Naive thymus-derived CD4-positive, alpha-beta T cell (primary cell): ENCODE measurements at regions of chr6 and their contacts with region 1.

Region 1: GRCh38 chr6:11653028-11653583 is 115.6 kb downstream of the TMEM170B start:
- DNase-seq: peak in 5 of 9 donors; percentile 3 to 48 (median 9)
- ATAC-seq: peak; percentile 49
- H3K4me3 ChIP-seq: no peak overlapping the region
- H3K4me3 Mint-ChIP-seq: peak overlapping the region in 1 of 10 donors; percentile 3
- H3K27ac ChIP-seq: no peak overlapping the region
- H3K27ac Mint-ChIP-seq: peak overlapping the region in 4 of 9 donors; percentile 8 to 70 (median 24)
- H3K4me1 ChIP-seq: peaks cover 0 to 4% of the 10 kb centered on the region in 2 donors
- H3K4me1 Mint-ChIP-seq: peaks cover 0 to 19% (median 5%) of the 10 kb centered on the region in 7 donors
- H3K27me3 ChIP-seq: no peaks in the 10 kb centered on the region
- H3K27me3 Mint-ChIP-seq: peaks cover 0 to 4% (median 0%) of the 10 kb centered on the region in 5 donors

Region 2: DNA sequence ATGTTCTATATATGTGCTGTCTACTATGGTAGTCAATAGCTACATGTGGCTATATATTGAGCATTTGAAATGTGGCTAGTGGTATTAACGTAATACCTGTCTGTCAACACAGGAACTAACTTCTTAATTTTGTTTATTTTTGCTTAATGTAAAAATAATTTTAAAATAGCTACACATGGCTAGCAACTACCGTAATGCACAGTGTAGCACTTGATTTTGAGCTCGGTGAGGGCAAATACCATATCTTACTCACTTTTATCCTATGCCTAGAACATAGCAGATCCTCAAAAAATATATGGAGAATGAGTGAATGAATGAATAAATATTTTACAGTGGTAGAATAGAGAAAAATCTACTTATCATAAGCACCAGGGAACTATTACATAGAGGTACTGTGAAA is 143.6 kb before region 1 on chr6:
- CTCF ChIA-PET with region 1: no interaction called
- POLR2A ChIA-PET with region 1: no interaction called
- intact Hi-C with region 1: no loop called
- DNase-seq: no peak
- ATAC-seq: no peak
- H3K4me3 ChIP-seq: no peak overlapping the region
- H3K4me3 Mint-ChIP-seq: no peak overlapping the region
- H3K27ac ChIP-seq: no peak overlapping the region
- H3K27ac Mint-ChIP-seq: no peak overlapping the region
- H3K4me1 ChIP-seq: no peaks in the 10 kb centered on the region
- H3K4me1 Mint-ChIP-seq: no peaks in the 10 kb centered on the region
- H3K27me3 ChIP-seq: no peaks in the 10 kb centered on the region
- H3K27me3 Mint-ChIP-seq: peaks cover 9 to 57% (median 15%) of the 10 kb centered on the region in 5 donors

Region 3: DNA sequence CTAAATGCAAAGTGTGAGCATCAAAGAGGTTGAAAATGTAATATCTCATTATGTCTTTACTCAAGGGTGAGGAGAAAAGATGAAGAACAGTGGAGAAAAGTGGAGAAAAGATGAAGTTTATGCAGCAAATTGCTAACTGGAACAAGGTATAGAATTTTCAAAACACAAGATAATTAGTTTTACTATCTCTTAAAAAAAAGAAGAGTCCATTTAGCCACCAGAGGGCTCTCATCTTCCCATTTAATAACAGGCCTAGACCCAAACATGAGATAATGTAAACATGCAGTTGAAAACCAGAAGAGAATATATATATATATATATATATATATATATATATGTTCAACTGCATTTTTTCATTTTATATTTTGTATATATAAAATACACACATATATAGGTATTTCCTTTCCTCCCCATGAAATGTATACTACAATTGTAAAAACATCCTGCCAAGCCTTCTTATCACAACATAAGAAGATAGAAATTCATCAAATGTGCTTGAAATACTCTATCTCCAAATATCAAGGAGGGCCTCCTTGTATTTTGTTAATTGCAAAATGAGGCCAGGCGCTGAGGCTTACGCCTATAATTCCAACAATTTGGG is 47.1 kb after region 1 on chr6:
- CTCF ChIA-PET with region 1: interaction called, 5 read pairs
- POLR2A ChIA-PET with region 1: no interaction called
- intact Hi-C with region 1: loop called in 1 of 2 experiments (anchors 1 kb)
- DNase-seq: peak in 7 of 9 donors; percentile 22 to 63 (median 51)
- ATAC-seq: peak; percentile 60
- H3K4me3 ChIP-seq: no peak overlapping the region
- H3K4me3 Mint-ChIP-seq: no peak overlapping the region
- H3K27ac ChIP-seq: no peak overlapping the region
- H3K27ac Mint-ChIP-seq: peak overlapping the region in 3 of 9 donors; percentile 21 to 66 (median 41)
- H3K4me1 ChIP-seq: peaks cover 0 to 9% of the 10 kb centered on the region in 2 donors
- H3K4me1 Mint-ChIP-seq: peaks cover 10 to 42% (median 35%) of the 10 kb centered on the region in 7 donors
- H3K27me3 ChIP-seq: no peaks in the 10 kb centered on the region
- H3K27me3 Mint-ChIP-seq: no peaks in the 10 kb centered on the region

Region 4: GRCh38 chr6:11869672-11870340 is 216.7 kb after region 1 on chr6:
- CTCF ChIA-PET with region 1: no interaction called
- POLR2A ChIA-PET with region 1: no interaction called
- intact Hi-C with region 1: no loop called
- DNase-seq: no peak
- ATAC-seq: no peak
- H3K4me3 ChIP-seq: no peak overlapping the region
- H3K4me3 Mint-ChIP-seq: no peak overlapping the region
- H3K27ac ChIP-seq: no peak overlapping the region
- H3K27ac Mint-ChIP-seq: no peak overlapping the region
- H3K4me1 ChIP-seq: no peaks in the 10 kb centered on the region
- H3K4me1 Mint-ChIP-seq: no peaks in the 10 kb centered on the region
- H3K27me3 ChIP-seq: no peaks in the 10 kb centered on the region
- H3K27me3 Mint-ChIP-seq: peaks cover 0 to 1% (median 0%) of the 10 kb centered on the region in 5 donors

Region 5: DNA sequence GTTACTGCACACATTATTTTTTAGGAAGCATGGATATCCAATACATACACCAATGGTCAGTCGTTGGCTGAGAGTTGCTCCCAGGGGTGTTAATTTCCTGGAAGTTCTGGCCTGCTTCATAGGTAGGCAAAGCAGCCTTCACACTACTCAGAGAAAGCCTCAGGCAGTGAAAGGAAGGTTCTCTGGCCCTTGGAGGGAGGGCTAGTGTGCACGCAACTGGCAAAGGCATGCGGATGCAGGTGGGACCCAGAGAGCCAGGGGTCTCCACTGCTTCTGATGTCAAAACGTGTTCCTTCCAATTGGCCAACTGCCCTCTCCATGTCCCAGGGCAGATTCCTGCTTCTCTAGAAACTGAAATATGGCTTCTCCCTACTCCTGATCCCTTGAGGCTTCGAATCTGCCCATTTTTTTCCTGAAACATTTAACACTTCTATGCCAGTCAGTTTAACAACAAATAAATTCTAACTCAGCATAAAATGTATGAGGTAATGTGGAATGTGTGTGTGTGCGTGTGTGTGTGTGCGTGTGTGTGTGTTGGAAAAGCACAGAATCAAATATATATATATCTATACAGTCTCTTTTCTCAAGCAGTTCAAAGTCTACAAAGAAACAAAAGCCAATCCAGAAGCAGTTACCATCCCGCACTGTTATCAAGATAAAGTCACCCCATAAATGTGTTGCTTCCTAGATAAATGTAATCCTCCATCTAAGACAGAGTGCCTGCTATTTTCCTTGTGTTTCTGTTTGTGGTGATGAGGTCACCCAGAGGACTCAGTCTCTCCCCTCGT is 265.0 kb after region 1 on chr6:
- CTCF ChIA-PET with region 1: no interaction called
- POLR2A ChIA-PET with region 1: no interaction called
- intact Hi-C with region 1: loop called in 1 of 2 experiments (anchors 10 kb)
- DNase-seq: no peak
- ATAC-seq: no peak
- H3K4me3 ChIP-seq: no peak overlapping the region
- H3K4me3 Mint-ChIP-seq: no peak overlapping the region
- H3K27ac ChIP-seq: no peak overlapping the region
- H3K27ac Mint-ChIP-seq: peak overlapping the region in 2 of 9 donors; percentile 6 to 78
- H3K4me1 ChIP-seq: no peaks in the 10 kb centered on the region
- H3K4me1 Mint-ChIP-seq: peaks cover 0 to 2% (median 0%) of the 10 kb centered on the region in 7 donors
- H3K27me3 ChIP-seq: no peaks in the 10 kb centered on the region
- H3K27me3 Mint-ChIP-seq: no peaks in the 10 kb centered on the region

Region 6: GRCh38 chr6:12150812-12151432 is 497.8 kb after region 1 on chr6:
- CTCF ChIA-PET with region 1: no interaction called
- POLR2A ChIA-PET with region 1: no interaction called
- intact Hi-C with region 1: loop called (anchors 2 to 5 kb)
- DNase-seq: peak in 5 of 9 donors; percentile 16 to 45 (median 35)
- ATAC-seq: no peak
- H3K4me3 ChIP-seq: no peak overlapping the region
- H3K4me3 Mint-ChIP-seq: no peak overlapping the region
- H3K27ac ChIP-seq: no peak overlapping the region
- H3K27ac Mint-ChIP-seq: no peak overlapping the region
- H3K4me1 ChIP-seq: no peaks in the 10 kb centered on the region
- H3K4me1 Mint-ChIP-seq: peaks cover 4 to 29% (median 14%) of the 10 kb centered on the region in 7 donors
- H3K27me3 ChIP-seq: no peaks in the 10 kb centered on the region
- H3K27me3 Mint-ChIP-seq: no peaks in the 10 kb centered on the region

Region 7: DNA sequence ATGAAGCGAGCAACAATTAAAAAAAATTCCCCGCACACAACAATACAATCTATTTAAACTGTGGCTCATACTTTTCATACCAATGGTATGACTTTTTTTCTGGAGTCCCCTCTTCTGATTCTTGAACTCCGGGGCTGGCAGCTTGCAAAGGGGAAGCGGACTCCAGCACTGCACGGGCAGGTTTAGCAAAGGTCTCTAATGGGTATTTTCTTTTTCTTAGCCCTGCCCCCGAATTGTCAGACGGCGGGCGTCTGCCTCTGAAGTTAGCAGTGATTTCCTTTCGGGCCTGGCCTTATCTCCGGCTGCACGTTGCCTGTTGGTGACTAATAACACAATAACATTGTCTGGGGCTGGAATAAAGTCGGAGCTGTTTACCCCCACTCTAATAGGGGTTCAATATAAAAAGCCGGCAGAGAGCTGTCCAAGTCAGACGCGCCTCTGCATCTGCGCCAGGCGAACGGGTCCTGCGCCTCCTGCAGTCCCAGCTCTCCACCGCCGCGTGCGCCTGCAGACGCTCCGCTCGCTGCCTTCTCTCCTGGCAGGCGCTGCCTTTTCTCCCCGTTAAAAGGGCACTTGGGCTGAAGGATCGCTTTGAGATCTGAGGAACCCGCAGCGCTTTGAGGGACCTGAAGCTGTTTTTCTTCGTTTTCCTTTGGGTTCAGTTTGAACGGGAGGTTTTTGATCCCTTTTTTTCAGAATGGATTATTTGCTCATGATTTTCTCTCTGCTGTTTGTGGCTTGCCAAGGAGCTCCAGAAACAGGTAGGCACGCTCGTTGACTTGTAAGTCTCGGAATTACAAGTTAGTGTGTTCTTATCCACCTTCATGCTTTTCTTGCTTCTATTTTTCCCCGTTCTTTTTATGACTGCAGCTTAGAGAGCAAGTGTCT is 637.1 kb after region 1 on chr6 and contains the start of gene EDN1:
- CTCF ChIA-PET with region 1: interaction called, 16 read pairs
- POLR2A ChIA-PET with region 1: no interaction called
- intact Hi-C with region 1: loop called (anchors 1 kb)
- DNase-seq: peak in 8 of 9 donors; percentile 16 to 61 (median 40)
- ATAC-seq: peak; percentile 87
- H3K4me3 ChIP-seq: peak within 1 kb of the TSS; percentile 46
- H3K4me3 Mint-ChIP-seq: peak within 1 kb of the TSS; percentile 82 to 96 (median 88)
- H3K27ac ChIP-seq: no peak within 1 kb of the TSS
- H3K27ac Mint-ChIP-seq: peak within 1 kb of the TSS in 1 of 9 donors; percentile 57
- H3K4me1 ChIP-seq: no peaks in the 10 kb centered on the region
- H3K4me1 Mint-ChIP-seq: peaks cover 7 to 22% (median 16%) of the 10 kb centered on the region in 7 donors
- H3K27me3 ChIP-seq: peaks cover 0 to 3% of the 10 kb centered on the region in 2 donors
- H3K27me3 Mint-ChIP-seq: peaks cover 31 to 51% (median 38%) of the 10 kb centered on the region in 5 donors
- total RNA-seq, gene EDN1: 0.17 to 1.7 (median 1.4) TPM

Region 8: GRCh38 chr6:12605888-12606345 is 952.8 kb after region 1 on chr6:
- CTCF ChIA-PET with region 1: interaction called, 5 read pairs
- POLR2A ChIA-PET with region 1: no interaction called
- intact Hi-C with region 1: loop called in 1 of 2 experiments (anchors 1 kb)
- DNase-seq: peak in 5 of 9 donors; percentile 11 to 50 (median 27)
- ATAC-seq: peak; percentile 75
- H3K4me3 ChIP-seq: no peak overlapping the region
- H3K4me3 Mint-ChIP-seq: peak overlapping the region in 1 of 10 donors; percentile 49
- H3K27ac ChIP-seq: no peak overlapping the region
- H3K27ac Mint-ChIP-seq: no peak overlapping the region
- H3K4me1 ChIP-seq: no peaks in the 10 kb centered on the region
- H3K4me1 Mint-ChIP-seq: peaks cover 0 to 12% (median 0%) of the 10 kb centered on the region in 7 donors
- H3K27me3 ChIP-seq: no peaks in the 10 kb centered on the region
- H3K27me3 Mint-ChIP-seq: peaks cover 2 to 39% (median 32%) of the 10 kb centered on the region in 5 donors